ENCODE measurements at regions of chr4 and their contacts with region 1.

Region 1: GRCh38 chr4:125719987-125720386 is 405.2 kb downstream of the FAT4 start:
- DNase-seq: peak; percentile 55
- H3K4me3 ChIP-seq: no peak overlapping the region
- H3K27ac ChIP-seq: peak overlapping the region; percentile 43
- H3K4me1 ChIP-seq: peaks cover 10% of the 10 kb centered on the region
- H3K27me3 ChIP-seq: no peaks in the 10 kb centered on the region
- CTCF ChIP-seq: no peak
- POLR2A ChIP-seq: no peak

Region 2: DNA sequence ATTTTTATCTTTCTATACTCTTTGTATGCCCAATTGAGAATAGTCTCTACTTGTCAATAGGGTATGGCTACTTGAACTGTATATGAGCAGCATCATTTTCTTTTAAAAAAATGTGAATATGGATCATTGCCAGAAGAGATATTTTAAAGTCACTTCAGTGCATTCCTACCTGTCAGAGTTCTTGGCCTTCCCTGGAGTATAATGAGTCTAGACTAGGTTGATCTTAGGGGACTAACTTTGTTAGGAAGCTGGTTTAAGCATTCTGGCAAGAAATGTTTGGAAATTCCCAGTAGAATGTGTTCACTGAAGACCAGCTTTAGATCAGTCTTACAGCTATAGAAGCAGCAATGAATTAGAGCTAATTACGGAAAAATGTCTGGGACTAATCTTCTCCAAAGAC is 227.0 kb before region 1 on chr4:
- CTCF ChIA-PET with region 1: no interaction called
- POLR2A ChIA-PET with region 1: no interaction called
- dilution Hi-C with region 1: no loop called
- intact Hi-C with region 1: no loop called
- DNase-seq: no peak
- H3K4me3 ChIP-seq: no peak overlapping the region
- H3K27ac ChIP-seq: no peak overlapping the region
- H3K4me1 ChIP-seq: no peaks in the 10 kb centered on the region
- H3K27me3 ChIP-seq: no peaks in the 10 kb centered on the region
- CTCF ChIP-seq: no peak
- POLR2A ChIP-seq: no peak

Region 3: DNA sequence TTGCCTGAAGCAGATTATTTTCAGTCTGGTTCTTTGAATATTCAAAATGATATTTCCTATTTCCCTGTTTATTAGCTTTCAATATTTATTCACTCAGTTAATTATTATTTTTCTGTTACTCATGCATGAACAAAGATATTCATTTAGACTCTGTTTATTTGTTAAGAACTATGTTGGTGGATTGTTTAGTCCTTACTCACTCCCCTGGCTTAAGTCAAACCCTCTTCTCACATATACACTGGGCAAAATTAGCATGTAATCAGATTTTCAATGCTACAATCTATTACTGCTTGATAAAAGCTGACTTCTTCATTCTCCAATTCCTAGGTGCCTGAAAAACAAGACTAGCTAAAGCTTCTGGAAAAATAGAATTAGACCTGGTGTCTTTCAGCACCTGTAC is 69.4 kb before region 1 on chr4:
- CTCF ChIA-PET with region 1: no interaction called
- POLR2A ChIA-PET with region 1: no interaction called
- dilution Hi-C with region 1: no loop called
- intact Hi-C with region 1: no loop called
- DNase-seq: no peak
- H3K4me3 ChIP-seq: no peak overlapping the region
- H3K27ac ChIP-seq: no peak overlapping the region
- H3K4me1 ChIP-seq: no peaks in the 10 kb centered on the region
- H3K27me3 ChIP-seq: no peaks in the 10 kb centered on the region
- CTCF ChIP-seq: no peak
- POLR2A ChIP-seq: no peak

Region 4: GRCh38 chr4:125703443-125703842 is 16.5 kb before region 1 on chr4:
- CTCF ChIA-PET with region 1: no interaction called
- POLR2A ChIA-PET with region 1: no interaction called
- dilution Hi-C with region 1: no loop called
- intact Hi-C with region 1: loop called (anchors 1 kb)
- DNase-seq: peak; percentile 75
- H3K4me3 ChIP-seq: no peak overlapping the region
- H3K27ac ChIP-seq: no peak overlapping the region
- H3K4me1 ChIP-seq: peaks cover 20% of the 10 kb centered on the region
- H3K27me3 ChIP-seq: no peaks in the 10 kb centered on the region
- CTCF ChIP-seq: no peak
- POLR2A ChIP-seq: no peak

Region 5: GRCh38 chr4:125735102-125735501 is 15.1 kb after region 1 on chr4:
- CTCF ChIA-PET with region 1: interaction called, 10 read pairs
- POLR2A ChIA-PET with region 1: no interaction called
- dilution Hi-C with region 1: no loop called
- intact Hi-C with region 1: loop called (anchors 1 kb)
- DNase-seq: peak; percentile 84
- H3K4me3 ChIP-seq: no peak overlapping the region
- H3K27ac ChIP-seq: peak overlapping the region; percentile 91
- H3K4me1 ChIP-seq: peaks cover 41% of the 10 kb centered on the region
- H3K27me3 ChIP-seq: no peaks in the 10 kb centered on the region
- CTCF ChIP-seq: no peak
- POLR2A ChIP-seq: no peak

Measured in endothelial cell of umbilical vein (primary cell).